PC-3 (cell line): ENCODE measurements at regions of chr7 and their contacts with region 1.

Region 1: DNA sequence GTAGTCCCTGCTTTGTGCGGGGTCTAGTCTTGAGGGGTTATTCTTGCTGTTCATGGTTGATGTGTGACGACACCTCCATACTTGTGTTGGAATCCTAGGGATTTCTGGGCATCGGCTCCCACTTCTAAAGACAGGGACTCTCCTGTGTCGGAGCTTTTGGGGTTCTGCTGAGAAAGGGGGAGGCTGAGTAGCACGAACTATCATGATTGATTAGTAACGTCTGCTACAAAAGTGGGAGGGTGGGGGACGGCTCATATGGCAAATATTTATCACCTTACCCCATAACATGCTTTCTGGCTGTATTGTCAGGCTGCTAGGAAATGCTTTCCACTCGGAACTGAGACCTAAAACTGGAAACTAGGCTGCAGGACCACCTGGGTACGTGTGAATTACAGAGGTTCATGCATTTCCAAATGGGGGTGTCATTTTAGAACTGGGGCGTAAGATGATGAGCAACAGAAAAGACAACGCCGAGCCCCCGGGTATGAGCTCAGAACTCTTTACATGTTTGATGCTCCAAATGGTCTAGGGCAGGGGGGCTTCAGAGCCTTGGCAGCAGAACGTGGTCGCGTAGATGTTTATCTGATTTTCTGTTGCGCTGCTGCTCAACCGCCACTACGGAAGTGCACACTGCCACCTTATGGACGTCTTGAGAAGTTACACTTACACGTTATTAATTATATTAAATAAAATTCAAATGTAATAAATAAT is 15.1 kb upstream of the NME8 start:
- DNase-seq: peak; percentile 56
- ATAC-seq: peak; percentile 43; the same call in 1 of the 2 replicates
- H3K4me3 ChIP-seq: peak overlapping the region; percentile 67
- H3K27ac ChIP-seq: no peak overlapping the region
- H3K4me1 ChIP-seq: no peaks in the 10 kb centered on the region
- H3K27me3 ChIP-seq: no peaks in the 10 kb centered on the region
- CTCF ChIP-seq: peak; percentile 53

Region 2: DNA sequence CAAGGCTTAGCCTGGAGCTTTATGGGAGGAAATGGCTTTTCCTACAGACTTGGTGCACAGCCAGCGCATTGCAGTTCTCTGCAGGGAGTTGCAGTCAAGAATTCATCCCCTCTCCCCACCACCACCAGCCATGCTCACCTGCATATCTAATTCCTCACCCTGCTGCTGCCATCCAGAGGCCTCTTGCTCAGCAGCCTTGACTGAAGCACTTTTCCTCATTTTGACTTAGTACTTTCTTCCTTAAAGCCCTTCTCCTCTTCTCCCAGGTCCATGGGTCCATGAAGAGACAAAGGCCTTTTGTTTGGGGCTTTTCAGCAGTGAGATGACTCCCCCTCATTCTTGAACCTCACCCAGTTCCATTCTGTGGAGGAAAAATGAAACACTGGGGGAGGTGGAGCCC is 189.4 kb before region 1 on chr7:
- CTCF ChIA-PET with region 1: no interaction called
- POLR2A ChIA-PET with region 1: no interaction called
- intact Hi-C with region 1: no loop called
- DNase-seq: no peak
- ATAC-seq: no peak
- H3K4me3 ChIP-seq: no peak overlapping the region
- H3K27ac ChIP-seq: no peak overlapping the region
- H3K4me1 ChIP-seq: no peaks in the 10 kb centered on the region
- H3K27me3 ChIP-seq: no peaks in the 10 kb centered on the region
- CTCF ChIP-seq: no peak

Region 3: GRCh38 chr7:37694175-37694779 is 139.0 kb before region 1 on chr7:
- CTCF ChIA-PET with region 1: no interaction called
- POLR2A ChIA-PET with region 1: no interaction called
- intact Hi-C with region 1: no loop called
- DNase-seq: no peak
- ATAC-seq: no peak
- H3K4me3 ChIP-seq: no peak overlapping the region
- H3K27ac ChIP-seq: no peak overlapping the region
- H3K4me1 ChIP-seq: no peaks in the 10 kb centered on the region
- H3K27me3 ChIP-seq: no peaks in the 10 kb centered on the region
- CTCF ChIP-seq: no peak

Region 4: DNA sequence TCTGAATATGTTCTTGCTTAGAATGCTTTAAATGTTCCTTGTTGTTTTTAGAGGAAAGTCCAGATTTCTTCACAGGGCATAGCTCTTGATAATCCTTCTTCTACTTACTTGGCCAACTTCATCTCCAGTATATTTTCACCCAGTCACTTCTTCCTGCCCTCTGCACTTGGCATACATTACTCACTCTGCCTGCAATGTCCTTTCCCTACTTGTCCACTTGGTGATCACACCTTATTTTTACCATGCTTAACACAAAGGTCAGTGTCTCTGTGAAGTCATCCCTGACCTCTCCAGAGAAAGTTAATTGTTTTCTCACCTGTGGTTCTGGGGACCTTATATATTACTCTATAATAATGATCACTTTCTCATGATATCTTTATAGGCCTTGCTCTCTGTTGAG is 60.1 kb after region 1 on chr7:
- CTCF ChIA-PET with region 1: no interaction called
- POLR2A ChIA-PET with region 1: no interaction called
- intact Hi-C with region 1: loop called (anchors 2 kb)
- DNase-seq: peak; percentile 8
- ATAC-seq: no peak
- H3K4me3 ChIP-seq: no peak overlapping the region
- H3K27ac ChIP-seq: no peak overlapping the region
- H3K4me1 ChIP-seq: no peaks in the 10 kb centered on the region
- H3K27me3 ChIP-seq: no peaks in the 10 kb centered on the region
- CTCF ChIP-seq: no peak